Spleen (tissue), 13 donors: ENCODE measurements at regions of chr7 and their contacts with region 1.

Region 1: DNA sequence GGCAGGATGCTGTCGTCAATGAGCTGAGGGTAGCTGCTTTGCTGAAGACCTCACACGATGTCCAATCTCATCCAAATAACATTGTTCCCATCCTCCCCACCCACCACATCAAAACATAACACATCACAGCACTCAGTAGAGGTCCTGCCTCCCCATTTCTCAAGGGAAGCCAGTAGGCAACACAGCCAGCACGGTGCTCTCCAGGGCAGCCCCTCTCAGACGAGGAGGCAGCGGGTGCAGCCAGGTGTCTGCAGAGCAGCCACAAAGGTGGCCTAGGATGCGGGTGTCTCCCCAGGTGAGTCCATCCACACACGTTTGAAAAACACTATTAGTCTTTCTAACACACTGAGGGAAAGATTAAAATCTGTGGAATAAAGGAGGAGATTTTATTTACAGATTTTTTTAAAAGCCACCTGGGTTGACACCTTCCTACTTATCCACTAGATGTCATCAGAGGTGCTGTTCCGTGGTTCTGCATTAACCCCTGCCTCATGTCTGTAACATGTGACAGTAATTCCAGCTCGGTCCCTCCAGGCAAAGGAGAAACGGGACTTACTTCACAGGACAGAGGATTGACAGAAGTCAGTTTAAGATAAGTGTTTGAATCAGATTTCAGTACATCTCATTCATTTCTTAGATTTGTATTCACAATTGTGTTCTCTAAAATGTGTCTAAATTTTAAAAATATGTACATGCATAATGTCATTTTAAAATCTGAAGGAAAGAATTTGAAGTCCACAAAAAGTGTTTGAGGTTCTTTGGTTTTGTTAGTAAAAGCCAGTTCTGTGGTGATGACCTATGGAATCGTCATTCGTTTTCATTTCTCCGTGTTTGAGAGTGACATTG is 68.0 kb downstream of the LANCL2 start:
- DNase-seq: no peak
- H3K4me3 ChIP-seq: no peak overlapping the region
- H3K27ac ChIP-seq: no peak overlapping the region
- H3K4me1 ChIP-seq: peaks cover 0 to 6% (median 0%) of the 10 kb centered on the region in 6 donors
- H3K27me3 ChIP-seq: no peaks in the 10 kb centered on the region
- CTCF ChIP-seq: peak in 7 of 11 experiments; percentile 17 to 47 (median 31)
- POLR2A ChIP-seq: no peak

Region 2: DNA sequence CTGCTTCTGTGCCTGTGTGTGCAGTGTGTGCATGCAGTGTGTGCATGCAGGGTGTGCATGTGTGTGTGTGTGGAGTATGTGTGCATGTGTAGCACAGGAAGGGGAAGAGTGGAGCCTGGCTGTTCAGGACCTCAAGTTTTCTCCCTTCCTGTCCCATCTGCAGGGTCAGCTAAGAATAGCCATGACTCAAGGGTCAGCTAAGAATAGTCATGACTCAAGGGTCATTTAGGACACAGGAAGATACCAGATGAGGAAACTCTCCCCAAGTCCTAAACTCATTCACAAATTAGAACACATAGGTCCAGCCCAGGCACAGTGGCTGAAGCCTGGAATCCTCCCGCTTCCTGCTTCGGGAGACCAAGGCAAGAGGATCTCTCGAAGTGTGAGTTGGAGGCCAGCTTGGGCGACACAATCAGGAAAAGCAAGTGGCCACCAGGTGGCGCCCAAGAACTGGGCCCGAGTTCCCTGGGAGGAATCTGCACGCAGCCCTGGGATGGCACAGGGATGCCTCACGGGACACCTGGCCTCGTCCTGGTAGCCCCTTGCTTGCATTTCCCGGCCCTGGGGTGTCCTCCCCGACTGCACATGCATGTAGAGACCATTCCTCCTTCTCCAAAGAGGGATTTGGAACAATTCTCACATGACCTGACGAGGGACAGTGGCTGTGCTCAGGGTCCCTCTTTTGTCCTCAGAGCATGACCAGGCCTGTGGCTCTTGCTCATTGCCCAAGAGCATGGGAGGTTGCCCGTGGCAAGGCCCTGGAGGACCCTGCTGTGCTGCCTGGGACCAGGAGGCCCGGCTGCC is 160.6 kb after region 1 on chr7:
- intact Hi-C with region 1: loop called (anchors 5 kb)
- DNase-seq: peak; percentile 91
- H3K4me3 ChIP-seq: no peak overlapping the region
- H3K27ac ChIP-seq: no peak overlapping the region
- H3K4me1 ChIP-seq: peaks cover 0 to 22% (median 11%) of the 10 kb centered on the region in 6 donors
- H3K27me3 ChIP-seq: no peaks in the 10 kb centered on the region
- CTCF ChIP-seq: peak; percentile 48 to 88 (median 72)
- POLR2A ChIP-seq: no peak